ENCODE measurements at regions of chr10 and their contacts with region 1.

Region 1: GRCh38 chr10:60572511-60573194 is 183.0 kb upstream of the ANK3 start:
- DNase-seq: peak in 4 of 9 donors; percentile 4 to 36 (median 22)
- ATAC-seq: peak; percentile 61
- H3K4me3 ChIP-seq: no peak overlapping the region
- H3K4me3 Mint-ChIP-seq: peak overlapping the region; percentile 42 to 87 (median 75)
- H3K27ac ChIP-seq: no peak overlapping the region
- H3K27ac Mint-ChIP-seq: peak overlapping the region; percentile 16 to 89 (median 62)
- H3K4me1 ChIP-seq: peaks cover 0 to 5% of the 10 kb centered on the region in 2 donors
- H3K4me1 Mint-ChIP-seq: peaks cover 25 to 65% (median 57%) of the 10 kb centered on the region in 7 donors
- H3K27me3 ChIP-seq: no peaks in the 10 kb centered on the region
- H3K27me3 Mint-ChIP-seq: no peaks in the 10 kb centered on the region

Region 2: DNA sequence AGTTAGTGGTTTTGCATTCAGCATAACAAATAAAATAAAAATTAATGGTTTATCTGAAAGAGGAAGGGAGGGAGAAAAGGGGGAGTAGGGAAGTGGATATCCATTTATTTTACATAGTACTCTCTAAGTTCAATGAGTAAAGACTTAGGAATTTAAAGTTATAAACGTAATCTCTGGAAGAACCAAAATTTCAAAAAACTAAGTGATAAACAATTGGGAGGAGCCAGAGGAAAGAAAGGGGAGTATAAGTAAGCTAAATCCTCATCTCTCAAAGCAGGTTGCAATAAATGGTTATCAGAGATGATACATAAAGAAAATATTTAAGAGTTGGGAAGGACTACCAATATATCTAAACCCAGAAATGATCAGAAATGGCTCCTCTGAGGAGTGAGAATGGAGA is 229.4 kb before region 1 on chr10:
- CTCF ChIA-PET with region 1: no interaction called
- POLR2A ChIA-PET with region 1: no interaction called
- intact Hi-C with region 1: no loop called
- DNase-seq: no peak
- ATAC-seq: no peak
- H3K4me3 ChIP-seq: no peak overlapping the region
- H3K4me3 Mint-ChIP-seq: no peak overlapping the region
- H3K27ac ChIP-seq: no peak overlapping the region
- H3K27ac Mint-ChIP-seq: no peak overlapping the region
- H3K4me1 ChIP-seq: no peaks in the 10 kb centered on the region
- H3K4me1 Mint-ChIP-seq: peaks cover 0 to 25% (median 6%) of the 10 kb centered on the region in 7 donors
- H3K27me3 ChIP-seq: no peaks in the 10 kb centered on the region
- H3K27me3 Mint-ChIP-seq: no peaks in the 10 kb centered on the region

Region 3: GRCh38 chr10:60536529-60537114 is 36.0 kb before region 1 on chr10:
- CTCF ChIA-PET with region 1: no interaction called
- POLR2A ChIA-PET with region 1: no interaction called
- intact Hi-C with region 1: loop called in 1 of 2 experiments (anchors 5 kb)
- DNase-seq: no peak
- ATAC-seq: no peak
- H3K4me3 ChIP-seq: no peak overlapping the region
- H3K4me3 Mint-ChIP-seq: peak overlapping the region in 1 of 10 donors; percentile 31
- H3K27ac ChIP-seq: no peak overlapping the region
- H3K27ac Mint-ChIP-seq: peak overlapping the region in 2 of 9 donors; percentile 12 to 14
- H3K4me1 ChIP-seq: no peaks in the 10 kb centered on the region
- H3K4me1 Mint-ChIP-seq: peaks cover 0 to 27% (median 8%) of the 10 kb centered on the region in 7 donors
- H3K27me3 ChIP-seq: no peaks in the 10 kb centered on the region
- H3K27me3 Mint-ChIP-seq: no peaks in the 10 kb centered on the region

Region 4: DNA sequence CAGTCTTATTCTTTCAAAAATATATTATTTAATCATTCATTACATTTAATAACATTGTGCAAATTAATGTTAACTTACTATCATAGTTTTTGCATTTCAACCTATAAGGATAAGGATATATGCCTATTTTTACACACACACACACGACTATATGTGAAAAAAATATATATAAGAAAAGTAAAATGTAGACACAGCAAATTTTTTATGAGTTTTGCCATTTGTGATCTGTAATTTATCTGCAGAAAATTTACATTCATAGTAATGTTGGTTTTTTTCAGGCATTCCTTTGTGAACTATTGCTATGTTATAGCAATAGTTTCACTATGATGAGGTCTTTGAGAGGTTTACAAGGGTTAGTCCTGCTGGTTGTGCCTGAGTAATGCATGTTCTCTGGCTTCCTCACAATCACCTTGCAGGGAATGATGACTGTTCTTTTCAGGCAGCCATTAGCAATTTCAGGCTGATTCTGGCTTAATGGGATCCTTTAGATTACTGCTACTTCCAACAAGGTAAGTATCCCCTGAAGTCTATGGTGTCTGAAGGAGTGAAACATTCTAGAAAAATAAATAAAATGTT is 21.9 kb after region 1 on chr10:
- CTCF ChIA-PET with region 1: no interaction called
- POLR2A ChIA-PET with region 1: no interaction called
- intact Hi-C with region 1: loop called in 1 of 2 experiments (anchors 2 kb)
- DNase-seq: no peak
- ATAC-seq: no peak
- H3K4me3 ChIP-seq: no peak overlapping the region
- H3K4me3 Mint-ChIP-seq: no peak overlapping the region
- H3K27ac ChIP-seq: no peak overlapping the region
- H3K27ac Mint-ChIP-seq: no peak overlapping the region
- H3K4me1 ChIP-seq: no peaks in the 10 kb centered on the region
- H3K4me1 Mint-ChIP-seq: peaks cover 0 to 22% (median 5%) of the 10 kb centered on the region in 7 donors
- H3K27me3 ChIP-seq: no peaks in the 10 kb centered on the region
- H3K27me3 Mint-ChIP-seq: no peaks in the 10 kb centered on the region

Region 5: DNA sequence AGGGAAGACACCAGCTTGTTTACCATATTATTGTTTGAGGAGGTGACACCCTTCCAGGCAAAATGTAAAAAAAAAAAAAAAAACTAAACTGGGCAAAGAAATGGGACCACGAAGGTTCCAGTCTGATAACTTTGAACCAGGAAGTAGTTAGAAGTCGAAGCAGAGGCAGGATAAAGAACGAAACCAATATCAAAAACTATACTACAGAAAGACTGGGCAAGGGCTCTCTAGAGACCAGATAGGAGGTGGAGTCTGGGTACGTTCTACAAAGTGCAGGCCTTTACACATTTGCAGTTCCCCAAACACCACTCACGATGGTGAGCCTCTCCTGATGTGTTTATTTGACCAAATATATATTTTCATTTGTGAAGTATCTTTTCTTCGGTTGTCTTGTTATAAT is 80.0 kb after region 1 on chr10:
- CTCF ChIA-PET with region 1: no interaction called
- POLR2A ChIA-PET with region 1: no interaction called
- intact Hi-C with region 1: no loop called
- DNase-seq: no peak
- ATAC-seq: no peak
- H3K4me3 ChIP-seq: no peak overlapping the region
- H3K4me3 Mint-ChIP-seq: peak overlapping the region in 4 of 10 donors; percentile 14 to 64 (median 21)
- H3K27ac ChIP-seq: no peak overlapping the region
- H3K27ac Mint-ChIP-seq: peak overlapping the region in 6 of 9 donors; percentile 28 to 91 (median 54)
- H3K4me1 ChIP-seq: peaks cover 0 to 7% of the 10 kb centered on the region in 2 donors
- H3K4me1 Mint-ChIP-seq: peaks cover 15 to 62% (median 34%) of the 10 kb centered on the region in 7 donors
- H3K27me3 ChIP-seq: no peaks in the 10 kb centered on the region
- H3K27me3 Mint-ChIP-seq: no peaks in the 10 kb centered on the region

Region 6: GRCh38 chr10:60733189-60733822 is 160.7 kb after region 1 on chr10:
- CTCF ChIA-PET with region 1: no interaction called
- POLR2A ChIA-PET with region 1: no interaction called
- intact Hi-C with region 1: loop called in 1 of 2 experiments (anchors 5 kb)
- DNase-seq: peak; percentile 29 to 66 (median 55)
- ATAC-seq: peak; percentile 80
- H3K4me3 ChIP-seq: peak overlapping the region; percentile 63
- H3K4me3 Mint-ChIP-seq: peak overlapping the region; percentile 59 to 96 (median 80)
- H3K27ac ChIP-seq: peak overlapping the region; percentile 89
- H3K27ac Mint-ChIP-seq: peak overlapping the region in 7 of 9 donors; percentile 33 to 98 (median 58)
- H3K4me1 ChIP-seq: peaks cover 17 to 35% of the 10 kb centered on the region in 2 donors
- H3K4me1 Mint-ChIP-seq: peaks cover 15 to 39% (median 31%) of the 10 kb centered on the region in 7 donors
- H3K27me3 ChIP-seq: no peaks in the 10 kb centered on the region
- H3K27me3 Mint-ChIP-seq: peaks cover 0 to 7% (median 2%) of the 10 kb centered on the region in 5 donors

Region 7: DNA sequence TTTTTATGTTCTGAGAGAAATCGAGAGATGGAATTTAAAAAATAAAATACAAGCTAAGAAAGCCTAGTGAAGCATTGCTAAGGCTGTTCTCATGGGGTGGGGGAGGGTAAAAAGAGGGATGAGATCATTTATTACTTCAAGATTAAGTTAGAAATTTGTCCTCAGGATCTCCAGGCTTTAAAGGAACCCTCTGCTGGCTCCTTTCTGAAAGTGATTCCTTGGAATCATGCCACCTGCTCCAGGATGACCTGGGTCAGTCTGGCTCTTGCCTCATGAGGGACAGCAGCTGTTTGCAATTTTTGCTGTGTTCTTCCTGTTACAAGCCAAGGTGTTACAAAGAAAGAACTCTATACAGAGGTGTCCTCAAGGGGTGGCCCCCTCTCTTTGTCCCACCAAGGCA is 275.5 kb after region 1 on chr10:
- CTCF ChIA-PET with region 1: no interaction called
- POLR2A ChIA-PET with region 1: no interaction called
- intact Hi-C with region 1: no loop called
- DNase-seq: no peak
- ATAC-seq: no peak
- H3K4me3 ChIP-seq: no peak overlapping the region
- H3K4me3 Mint-ChIP-seq: no peak overlapping the region
- H3K27ac ChIP-seq: no peak overlapping the region
- H3K27ac Mint-ChIP-seq: no peak overlapping the region
- H3K4me1 ChIP-seq: no peaks in the 10 kb centered on the region
- H3K4me1 Mint-ChIP-seq: no peaks in the 10 kb centered on the region
- H3K27me3 ChIP-seq: no peaks in the 10 kb centered on the region
- H3K27me3 Mint-ChIP-seq: peaks cover 0 to 15% (median 7%) of the 10 kb centered on the region in 5 donors

Region 8: GRCh38 chr10:62098278-62099121 is 1525.8 kb after region 1 on chr10:
- CTCF ChIA-PET with region 1: no interaction called
- POLR2A ChIA-PET with region 1: no interaction called
- intact Hi-C with region 1: no loop called
- DNase-seq: no peak
- ATAC-seq: no peak
- H3K4me3 ChIP-seq: no peak overlapping the region
- H3K4me3 Mint-ChIP-seq: peak overlapping the region in 3 of 10 donors; percentile 8 to 35 (median 17)
- H3K27ac ChIP-seq: no peak overlapping the region
- H3K27ac Mint-ChIP-seq: peak overlapping the region in 8 of 9 donors; percentile 8 to 85 (median 31)
- H3K4me1 ChIP-seq: no peaks in the 10 kb centered on the region
- H3K4me1 Mint-ChIP-seq: peaks cover 0 to 43% (median 18%) of the 10 kb centered on the region in 7 donors
- H3K27me3 ChIP-seq: no peaks in the 10 kb centered on the region
- H3K27me3 Mint-ChIP-seq: no peaks in the 10 kb centered on the region